ENCODE measurements at regions of chr11 and their contacts with region 1.

Region 1: GRCh38 chr11:73950869-73951710 is at the start of gene DNAJB13:
- DNase-seq: peak; percentile 67 to 85 (median 80)
- ATAC-seq: peak; percentile 99
- H3K4me3 ChIP-seq: no peak within 1 kb of the TSS
- H3K27ac ChIP-seq: no peak within 1 kb of the TSS
- H3K4me1 ChIP-seq: peaks cover 0 to 3% of the 10 kb centered on the region in 2 experiments; a peak in 2 of 5 replicates
- H3K27me3 ChIP-seq: no peaks in the 10 kb centered on the region
- CTCF ChIP-seq: no peak
- EP300 ChIP-seq: no peak
- POLR2A ChIP-seq: no peak
- RAD21 ChIP-seq: no peak
- polyA plus RNA-seq, gene DNAJB13: not detected

Region 2: GRCh38 chr11:73750228-73750627 is 200.9 kb before region 1 on chr11:
- CTCF ChIA-PET with region 1: no interaction called
- POLR2A ChIA-PET with region 1: no interaction called
- in situ Hi-C with region 1: no loop called
- intact Hi-C with region 1: no loop called
- DNase-seq: no peak
- ATAC-seq: no peak
- H3K4me3 ChIP-seq: no peak overlapping the region
- H3K27ac ChIP-seq: no peak overlapping the region
- H3K4me1 ChIP-seq: peaks cover 2 to 3% of the 10 kb centered on the region in 2 experiments; a peak in 1 of 5 replicates
- H3K27me3 ChIP-seq: no peaks in the 10 kb centered on the region
- CTCF ChIP-seq: no peak
- EP300 ChIP-seq: no peak
- POLR2A ChIP-seq: no peak
- RAD21 ChIP-seq: no peak

Region 3: GRCh38 chr11:74077193-74077592 is 126.1 kb after region 1 on chr11:
- CTCF ChIA-PET with region 1: no interaction called
- POLR2A ChIA-PET with region 1: no interaction called
- in situ Hi-C with region 1: no loop called
- intact Hi-C with region 1: no loop called
- DNase-seq: no peak
- ATAC-seq: no peak
- H3K4me3 ChIP-seq: no peak overlapping the region
- H3K27ac ChIP-seq: no peak overlapping the region
- H3K4me1 ChIP-seq: no peaks in the 10 kb centered on the region
- H3K27me3 ChIP-seq: no peaks in the 10 kb centered on the region
- CTCF ChIP-seq: no peak
- EP300 ChIP-seq: no peak
- POLR2A ChIP-seq: no peak
- RAD21 ChIP-seq: no peak

Region 4: DNA sequence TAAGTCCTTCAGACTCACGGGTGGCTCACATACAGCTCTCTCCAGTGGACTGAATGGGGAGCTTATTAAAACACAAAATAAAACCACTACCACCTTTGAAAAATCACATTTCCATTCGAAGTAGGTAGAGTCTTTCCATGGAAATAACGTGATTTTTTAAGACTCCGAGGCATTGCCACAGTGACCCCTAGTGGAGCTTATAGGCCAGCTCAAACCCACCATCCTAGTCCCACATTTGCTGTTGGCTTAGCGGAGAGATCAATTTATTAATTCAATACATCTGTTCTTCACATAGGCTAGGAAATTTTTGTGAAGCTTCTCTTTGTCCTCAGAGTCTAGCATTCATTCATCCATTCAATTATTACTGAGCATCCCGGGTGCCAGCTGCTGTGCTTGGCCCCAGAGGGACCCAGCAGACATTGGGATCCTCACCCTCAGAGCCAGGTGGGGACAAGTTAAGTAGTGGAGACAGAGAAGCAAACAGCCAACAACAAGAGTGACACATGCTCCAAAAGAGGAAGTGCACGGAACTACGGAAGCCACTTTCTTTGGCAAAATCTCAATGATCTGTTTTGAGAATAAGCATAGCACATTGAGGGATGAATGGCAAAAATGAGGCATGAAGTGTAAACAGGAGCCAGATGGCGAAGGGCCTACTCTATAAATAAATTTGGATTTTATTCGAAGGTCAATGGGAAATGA is 370.5 kb after region 1 on chr11:
- CTCF ChIA-PET with region 1: no interaction called
- POLR2A ChIA-PET with region 1: no interaction called
- in situ Hi-C with region 1: loop called (anchors 10 kb)
- intact Hi-C with region 1: no loop called
- DNase-seq: peak; percentile 30 to 59 (median 39)
- ATAC-seq: peak; percentile 74
- H3K4me3 ChIP-seq: no peak overlapping the region
- H3K27ac ChIP-seq: no peak overlapping the region
- H3K4me1 ChIP-seq: no peaks in the 10 kb centered on the region; a peak in 1 of 5 replicates
- H3K27me3 ChIP-seq: peaks cover 0 to 10% of the 10 kb centered on the region in 2 experiments; a peak in 1 of 5 replicates
- CTCF ChIP-seq: peak; percentile 61 to 75 (median 71); a peak in 5 of 6 replicates
- EP300 ChIP-seq: no peak
- POLR2A ChIP-seq: no peak
- RAD21 ChIP-seq: peak in 1 of 2 experiments; percentile 69; a peak in 3 of 4 replicates

Measured in K562 (cell line).